Uterus (tissue), 4 donors: ENCODE measurements at regions of chr4 and their contacts with region 1.

Region 1: DNA sequence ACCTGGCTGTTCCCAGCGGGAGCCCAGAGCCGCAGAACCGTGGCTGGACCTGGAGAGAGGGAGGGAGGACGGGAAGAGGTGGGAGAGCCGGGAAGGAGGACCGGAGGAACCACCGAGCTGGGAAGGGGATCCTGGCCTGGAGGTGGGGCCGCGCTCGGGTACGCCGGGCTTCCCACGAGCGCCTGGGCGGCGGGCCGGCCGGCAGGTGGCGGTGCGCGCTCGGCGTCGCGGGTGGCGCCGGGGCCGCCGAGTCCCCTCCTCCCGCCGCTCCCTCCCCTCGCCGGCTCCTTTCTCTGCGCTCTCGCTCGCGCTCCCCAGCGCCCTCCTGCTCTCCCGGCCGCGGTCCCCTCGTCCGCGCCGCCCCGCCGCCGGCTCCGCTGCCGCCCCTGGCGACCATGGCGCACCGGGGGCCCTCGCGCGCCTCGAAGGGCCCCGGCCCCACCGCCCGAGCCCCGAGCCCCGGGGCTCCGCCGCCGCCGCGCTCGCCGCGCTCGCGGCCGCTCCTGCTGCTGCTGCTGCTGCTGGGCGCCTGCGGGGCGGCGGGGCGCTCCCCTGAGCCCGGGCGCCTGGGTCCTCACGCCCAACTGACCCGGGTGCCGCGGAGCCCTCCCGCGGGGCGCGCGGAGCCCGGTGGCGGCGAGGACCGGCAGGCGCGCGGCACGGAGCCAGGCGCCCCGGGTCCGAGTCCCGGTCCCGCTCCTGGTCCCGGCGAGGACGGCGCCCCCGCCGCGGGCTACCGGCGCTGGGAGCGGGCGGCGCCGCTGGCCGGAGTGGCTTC is at the start of gene SORCS2:
- DNase-seq: peak; percentile 62 to 80
- H3K4me3 ChIP-seq: peak within 1 kb of the TSS; percentile 23 to 51
- H3K27ac ChIP-seq: peak within 1 kb of the TSS in 1 of 2 donors; percentile 26
- H3K4me1 ChIP-seq: peaks cover 0 to 6% of the 10 kb centered on the region in 2 donors
- H3K27me3 ChIP-seq: no peaks in the 10 kb centered on the region
- CTCF ChIP-seq: peak; percentile 45 to 95 (median 92)
- POLR2A ChIP-seq: peak in 1 of 2 donors; percentile 34
- total RNA-seq, gene SORCS2: 0.26 to 17.1 (median 2.9) TPM

Region 2: GRCh38 chr4:6673660-6674499 is 518.6 kb before region 1 on chr4:
- intact Hi-C with region 1: no loop called
- DNase-seq: peak; percentile 95
- H3K4me3 ChIP-seq: peak overlapping the region; percentile 46 to 89
- H3K27ac ChIP-seq: peak overlapping the region; percentile 85 to 88
- H3K4me1 ChIP-seq: peaks cover 13 to 18% of the 10 kb centered on the region in 2 donors
- H3K27me3 ChIP-seq: no peaks in the 10 kb centered on the region
- CTCF ChIP-seq: peak in 2 of 4 experiments; percentile 1 to 18
- POLR2A ChIP-seq: peak; percentile 63 to 86

Region 3: GRCh38 chr4:7094916-7095315 is 97.5 kb before region 1 on chr4:
- intact Hi-C with region 1: no loop called
- DNase-seq: peak in 1 of 2 donors; percentile 10
- H3K4me3 ChIP-seq: no peak overlapping the region
- H3K27ac ChIP-seq: no peak overlapping the region
- H3K4me1 ChIP-seq: peaks cover 0 to 2% of the 10 kb centered on the region in 2 donors
- H3K27me3 ChIP-seq: no peaks in the 10 kb centered on the region
- CTCF ChIP-seq: no peak
- POLR2A ChIP-seq: no peak

Region 4: GRCh38 chr4:7295911-7296660 is 103.6 kb after region 1 on chr4:
- intact Hi-C with region 1: loop called (anchors 5 kb)
- DNase-seq: peak; percentile 42 to 66
- H3K4me3 ChIP-seq: no peak overlapping the region
- H3K27ac ChIP-seq: no peak overlapping the region
- H3K4me1 ChIP-seq: peaks cover 0 to 6% of the 10 kb centered on the region in 2 donors
- H3K27me3 ChIP-seq: no peaks in the 10 kb centered on the region
- CTCF ChIP-seq: peak; percentile 60 to 72 (median 71)
- POLR2A ChIP-seq: no peak

Region 5: GRCh38 chr4:7607156-7607910 is 414.9 kb after region 1 on chr4:
- intact Hi-C with region 1: no loop called
- DNase-seq: no peak
- H3K4me3 ChIP-seq: no peak overlapping the region
- H3K27ac ChIP-seq: no peak overlapping the region
- H3K4me1 ChIP-seq: no peaks in the 10 kb centered on the region
- H3K27me3 ChIP-seq: no peaks in the 10 kb centered on the region
- CTCF ChIP-seq: no peak
- POLR2A ChIP-seq: no peak

Region 6: DNA sequence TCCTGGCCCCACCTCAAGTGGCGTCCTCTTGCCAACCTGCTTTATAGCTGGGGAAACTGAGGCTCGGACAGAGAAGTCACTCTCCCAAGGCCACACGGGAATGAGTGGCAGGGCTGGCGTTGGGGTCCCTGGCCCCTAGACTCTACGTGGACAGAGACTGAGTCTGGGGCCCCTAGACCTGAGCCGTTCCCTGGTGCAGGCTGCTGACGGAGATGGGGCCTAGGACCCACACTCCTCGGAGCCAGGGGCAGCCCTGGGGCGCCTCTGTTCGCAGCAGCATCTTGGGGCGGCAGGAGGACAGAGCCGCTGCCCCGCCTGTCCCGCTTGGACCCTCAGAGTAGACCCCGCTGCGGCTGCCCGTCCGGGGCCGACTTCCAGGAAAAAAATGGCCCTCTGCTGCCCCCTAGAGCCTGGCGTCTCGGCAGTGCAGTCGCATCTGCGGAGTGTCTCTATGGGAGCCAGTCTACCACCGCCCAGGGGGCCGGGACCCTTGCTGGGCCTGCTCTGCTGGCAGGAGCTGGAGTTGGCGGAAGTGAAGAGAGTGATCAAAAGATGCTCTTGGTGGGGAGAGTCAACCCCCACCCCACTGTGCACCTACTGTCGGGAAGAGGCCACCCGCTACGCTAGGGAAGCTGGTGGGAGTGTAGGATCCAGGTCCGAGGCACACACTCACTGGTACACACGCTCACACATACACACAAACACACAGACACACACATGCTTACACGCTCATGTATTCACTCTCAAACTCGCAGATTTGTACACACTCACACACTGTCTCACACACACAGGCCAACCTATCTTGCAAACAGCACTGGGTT is 527.1 kb after region 1 on chr4:
- intact Hi-C with region 1: loop called (anchors 5 kb)
- DNase-seq: peak; percentile 44 to 66
- H3K4me3 ChIP-seq: no peak overlapping the region
- H3K27ac ChIP-seq: no peak overlapping the region
- H3K4me1 ChIP-seq: peaks cover 0 to 5% of the 10 kb centered on the region in 2 donors
- H3K27me3 ChIP-seq: no peaks in the 10 kb centered on the region
- CTCF ChIP-seq: peak; percentile 68 to 75 (median 73)
- POLR2A ChIP-seq: no peak